ENCODE measurements at regions of chr11 and their contacts with region 1.

Region 1: GRCh38 chr11:77472991-77473800 is 698 bp downstream of the PAK1 start:
- DNase-seq: peak; percentile 59
- ATAC-seq: peak; percentile 81
- H3K4me3 Mint-ChIP-seq: peak overlapping the region; percentile 82
- H3K27ac Mint-ChIP-seq: peak overlapping the region; percentile 87
- H3K4me1 Mint-ChIP-seq: peaks cover 34% of the 10 kb centered on the region
- H3K27me3 Mint-ChIP-seq: peaks cover 25% of the 10 kb centered on the region

Region 2: DNA sequence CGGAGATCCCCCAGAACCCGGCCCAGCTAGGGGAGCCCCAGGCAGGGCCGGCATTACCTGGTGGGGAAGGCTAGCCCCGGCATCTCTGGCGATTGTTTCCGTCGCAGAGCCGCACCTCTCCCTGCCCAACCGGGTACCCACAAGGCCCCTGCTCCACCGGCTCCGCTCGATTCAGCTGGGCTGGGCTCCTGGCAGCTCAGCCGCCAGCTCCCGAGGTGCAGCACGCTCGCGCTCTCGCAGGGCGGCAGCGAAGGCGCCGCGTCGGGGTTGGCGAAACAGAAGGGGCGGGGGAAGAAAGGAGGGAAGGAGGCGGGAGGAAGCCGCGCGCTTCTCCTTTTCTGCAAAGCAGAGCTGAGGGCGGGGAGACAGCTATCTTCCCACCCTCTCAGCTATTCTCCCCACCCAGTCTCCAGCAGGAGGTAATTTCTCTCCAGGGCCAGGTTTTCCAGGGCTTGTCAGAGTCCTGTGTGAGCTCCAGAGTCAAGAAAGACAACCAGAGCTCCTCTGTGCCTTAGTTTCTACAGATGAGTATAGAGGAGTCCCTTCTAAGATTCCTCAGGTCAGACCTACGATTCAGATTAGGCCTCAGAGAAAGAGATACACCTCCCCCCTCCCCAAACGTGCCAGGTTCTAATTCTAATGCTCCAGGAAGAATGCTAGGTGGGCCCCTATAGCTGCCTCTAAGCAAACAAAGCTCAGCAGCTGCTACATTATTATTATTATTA is 61.3 kb before region 1 on chr11:
- CTCF ChIA-PET with region 1: interaction called, 19 read pairs
- POLR2A ChIA-PET with region 1: interaction called, 6 read pairs
- DNase-seq: peak; percentile 88
- ATAC-seq: peak; percentile 99
- H3K4me3 Mint-ChIP-seq: peak overlapping the region; percentile 90
- H3K27ac Mint-ChIP-seq: peak overlapping the region; percentile 91
- H3K4me1 Mint-ChIP-seq: peaks cover 51% of the 10 kb centered on the region
- H3K27me3 Mint-ChIP-seq: no peaks in the 10 kb centered on the region

Region 3: GRCh38 chr11:77449060-77449521 is 24.1 kb before region 1 on chr11:
- CTCF ChIA-PET with region 1: interaction called, 46 read pairs
- POLR2A ChIA-PET with region 1: interaction called, 3 read pairs
- DNase-seq: peak; percentile 36
- ATAC-seq: peak; percentile 57
- H3K4me3 Mint-ChIP-seq: peak overlapping the region; percentile 55
- H3K27ac Mint-ChIP-seq: peak overlapping the region; percentile 76
- H3K4me1 Mint-ChIP-seq: peaks cover 76% of the 10 kb centered on the region
- H3K27me3 Mint-ChIP-seq: no peaks in the 10 kb centered on the region

Region 4: GRCh38 chr11:77457340-77457739 is 15.9 kb before region 1 on chr11:
- CTCF ChIA-PET with region 1: interaction called, 15 read pairs
- POLR2A ChIA-PET with region 1: no interaction called
- DNase-seq: no peak
- ATAC-seq: no peak
- H3K4me3 Mint-ChIP-seq: no peak overlapping the region
- H3K27ac Mint-ChIP-seq: no peak overlapping the region
- H3K4me1 Mint-ChIP-seq: peaks cover 28% of the 10 kb centered on the region
- H3K27me3 Mint-ChIP-seq: peaks cover 16% of the 10 kb centered on the region

Measured in activated CD8-positive, alpha-beta T cell treated with anti-CD3 and anti-CD28 coated beads, Interleukin-2, amount 10 ng/mL, durations not matched to agents 7 days and 5 days (primary cell).